Activated CD4-positive, alpha-beta memory T cell treated with anti-CD3 and anti-CD28 coated beads for 36 hours (primary cell): ENCODE measurements at regions of chr1 and their contacts with region 1.

Region 1: DNA sequence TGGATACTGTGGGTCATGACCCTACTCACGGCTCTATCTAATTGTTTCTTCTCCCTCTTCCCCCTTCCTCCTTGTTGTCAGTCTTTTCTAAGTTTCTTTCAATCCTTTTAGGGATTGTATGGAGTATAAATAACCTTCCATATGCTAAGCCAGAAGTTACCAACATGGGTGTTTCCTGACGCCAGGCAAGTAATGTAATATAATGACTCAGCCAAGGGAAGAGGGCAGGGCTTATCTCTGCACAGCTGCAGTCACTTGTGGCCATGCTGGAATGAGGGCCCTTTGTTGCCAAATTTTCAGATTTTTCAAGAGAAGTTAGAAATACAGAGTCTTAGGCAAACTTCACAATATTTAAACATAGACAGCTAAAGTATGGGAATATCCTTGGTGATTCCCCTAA is 194.6 kb downstream of the ST6GALNAC3 start:
- DNase-seq: no peak
- H3K4me3 Mint-ChIP-seq: no peak overlapping the region
- H3K27ac Mint-ChIP-seq: no peak overlapping the region
- H3K4me1 Mint-ChIP-seq: peaks cover 48% of the 10 kb centered on the region
- H3K27me3 Mint-ChIP-seq: no peaks in the 10 kb centered on the region

Region 2: DNA sequence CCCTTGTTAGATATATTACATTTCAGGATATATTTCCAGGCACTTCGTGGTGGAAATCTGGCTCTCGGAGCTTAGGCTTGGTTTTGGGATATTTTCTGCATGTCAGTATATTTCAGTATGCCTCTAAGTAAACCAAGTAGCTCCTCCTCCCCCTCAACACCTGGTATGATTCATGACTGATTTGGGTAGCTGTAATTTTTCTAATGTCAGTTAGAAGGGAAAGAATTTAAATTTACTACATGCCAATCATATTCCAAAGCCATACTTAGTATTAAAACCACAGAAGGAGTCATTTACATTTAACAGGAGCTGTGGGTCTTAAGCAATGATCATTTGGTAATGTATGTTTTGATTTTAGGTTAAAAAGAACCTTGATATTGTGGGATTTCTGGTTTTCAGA is 154.0 kb before region 1 on chr1:
- CTCF ChIA-PET with region 1: no interaction called
- POLR2A ChIA-PET with region 1: no interaction called
- intact Hi-C with region 1: no loop called
- DNase-seq: no peak
- H3K4me3 Mint-ChIP-seq: no peak overlapping the region
- H3K27ac Mint-ChIP-seq: no peak overlapping the region
- H3K4me1 Mint-ChIP-seq: no peaks in the 10 kb centered on the region
- H3K27me3 Mint-ChIP-seq: no peaks in the 10 kb centered on the region

Region 3: DNA sequence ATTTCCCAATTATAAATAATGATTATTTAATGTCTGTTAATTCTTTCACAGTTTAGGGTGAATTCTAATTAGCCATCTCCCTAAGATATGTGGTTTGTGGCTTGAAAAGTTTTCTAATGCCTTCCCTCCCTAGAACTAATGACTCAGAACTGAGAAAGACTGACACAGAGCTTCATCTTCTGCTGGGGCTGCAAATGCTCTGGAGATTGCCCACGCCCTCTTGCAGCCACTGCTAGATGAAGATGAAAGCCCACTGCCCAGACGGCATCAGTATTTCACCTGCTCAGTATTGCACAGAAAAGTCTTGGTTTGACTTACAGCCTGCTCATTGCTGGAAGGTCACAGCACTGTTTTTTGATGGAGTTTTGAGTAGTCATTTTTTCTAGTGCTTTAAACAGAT is 93.1 kb before region 1 on chr1:
- CTCF ChIA-PET with region 1: no interaction called
- POLR2A ChIA-PET with region 1: no interaction called
- intact Hi-C with region 1: loop called (anchors 1 kb)
- DNase-seq: peak; percentile 62
- H3K4me3 Mint-ChIP-seq: no peak overlapping the region
- H3K27ac Mint-ChIP-seq: no peak overlapping the region
- H3K4me1 Mint-ChIP-seq: peaks cover 10% of the 10 kb centered on the region
- H3K27me3 Mint-ChIP-seq: peaks cover 5% of the 10 kb centered on the region

Region 4: GRCh38 chr1:76254104-76255030 is 14.8 kb before region 1 on chr1:
- CTCF ChIA-PET with region 1: no interaction called
- POLR2A ChIA-PET with region 1: no interaction called
- intact Hi-C with region 1: loop called (anchors 1 kb)
- DNase-seq: no peak
- H3K4me3 Mint-ChIP-seq: no peak overlapping the region
- H3K27ac Mint-ChIP-seq: no peak overlapping the region
- H3K4me1 Mint-ChIP-seq: peaks cover 40% of the 10 kb centered on the region
- H3K27me3 Mint-ChIP-seq: no peaks in the 10 kb centered on the region